Upper lobe of right lung (tissue), 1 donor: ENCODE measurements at regions of chr12 and their contacts with region 1.

Region 1: DNA sequence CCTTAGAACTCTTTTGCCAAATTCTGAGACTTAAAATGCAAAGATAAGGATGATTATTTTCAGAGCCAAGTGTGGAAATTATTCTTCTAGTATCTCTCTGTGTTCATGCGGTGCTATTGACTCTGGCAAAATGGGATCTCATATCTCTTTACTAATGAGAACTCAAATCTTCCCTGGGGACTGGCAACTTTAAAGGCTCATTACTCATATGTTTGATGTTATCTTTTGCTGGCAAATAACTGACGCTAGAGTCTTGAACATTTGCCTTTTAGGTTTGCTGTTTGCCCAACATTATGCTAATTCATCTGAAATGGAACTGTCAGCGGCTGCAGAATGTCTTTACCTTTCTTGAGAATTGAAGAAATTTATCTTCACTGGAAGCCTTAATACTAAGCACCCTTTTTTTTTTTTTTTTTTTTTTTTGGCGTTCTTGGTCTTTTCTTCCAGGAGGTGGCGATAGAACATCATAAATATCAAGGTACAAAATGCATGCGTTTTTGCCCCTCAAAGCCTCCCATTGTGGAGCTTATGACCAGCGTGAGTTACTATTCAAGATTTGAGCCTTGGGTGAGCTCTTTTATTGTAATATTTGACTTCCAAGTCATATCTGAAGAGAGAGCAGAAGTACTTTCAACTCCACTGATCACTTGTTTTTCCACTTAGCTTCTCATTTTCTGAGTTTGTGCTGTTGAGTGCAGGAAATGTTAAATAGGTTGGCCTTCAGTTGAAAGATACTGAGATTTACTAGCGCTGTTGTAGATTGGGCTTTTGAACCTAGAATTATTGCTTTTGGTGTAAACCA is 86.6 kb downstream of the CAND1 start:
- DNase-seq: no peak
- ATAC-seq: peak; percentile 70
- H3K4me3 ChIP-seq: no peak overlapping the region
- H3K27ac ChIP-seq: no peak overlapping the region
- H3K4me1 ChIP-seq: peaks cover 30% of the 10 kb centered on the region
- H3K27me3 ChIP-seq: no peaks in the 10 kb centered on the region
- CTCF ChIP-seq: peak; percentile 60

Region 2: GRCh38 chr12:66548338-66549049 is 807.3 kb before region 1 on chr12:
- intact Hi-C with region 1: no loop called
- DNase-seq: no peak
- ATAC-seq: no peak
- H3K4me3 ChIP-seq: no peak overlapping the region
- H3K27ac ChIP-seq: no peak overlapping the region
- H3K4me1 ChIP-seq: no peaks in the 10 kb centered on the region
- H3K27me3 ChIP-seq: no peaks in the 10 kb centered on the region
- CTCF ChIP-seq: no peak

Region 3: GRCh38 chr12:67394550-67394949 is 38.8 kb after region 1 on chr12:
- intact Hi-C with region 1: no loop called
- DNase-seq: no peak
- ATAC-seq: no peak
- H3K4me3 ChIP-seq: no peak overlapping the region
- H3K27ac ChIP-seq: no peak overlapping the region
- H3K4me1 ChIP-seq: no peaks in the 10 kb centered on the region
- H3K27me3 ChIP-seq: no peaks in the 10 kb centered on the region
- CTCF ChIP-seq: no peak

Region 4: GRCh38 chr12:67458215-67458614 is 102.4 kb after region 1 on chr12:
- intact Hi-C with region 1: no loop called
- DNase-seq: no peak
- ATAC-seq: no peak
- H3K4me3 ChIP-seq: no peak overlapping the region
- H3K27ac ChIP-seq: no peak overlapping the region
- H3K4me1 ChIP-seq: peaks cover 16% of the 10 kb centered on the region
- H3K27me3 ChIP-seq: no peaks in the 10 kb centered on the region
- CTCF ChIP-seq: no peak

Region 5: DNA sequence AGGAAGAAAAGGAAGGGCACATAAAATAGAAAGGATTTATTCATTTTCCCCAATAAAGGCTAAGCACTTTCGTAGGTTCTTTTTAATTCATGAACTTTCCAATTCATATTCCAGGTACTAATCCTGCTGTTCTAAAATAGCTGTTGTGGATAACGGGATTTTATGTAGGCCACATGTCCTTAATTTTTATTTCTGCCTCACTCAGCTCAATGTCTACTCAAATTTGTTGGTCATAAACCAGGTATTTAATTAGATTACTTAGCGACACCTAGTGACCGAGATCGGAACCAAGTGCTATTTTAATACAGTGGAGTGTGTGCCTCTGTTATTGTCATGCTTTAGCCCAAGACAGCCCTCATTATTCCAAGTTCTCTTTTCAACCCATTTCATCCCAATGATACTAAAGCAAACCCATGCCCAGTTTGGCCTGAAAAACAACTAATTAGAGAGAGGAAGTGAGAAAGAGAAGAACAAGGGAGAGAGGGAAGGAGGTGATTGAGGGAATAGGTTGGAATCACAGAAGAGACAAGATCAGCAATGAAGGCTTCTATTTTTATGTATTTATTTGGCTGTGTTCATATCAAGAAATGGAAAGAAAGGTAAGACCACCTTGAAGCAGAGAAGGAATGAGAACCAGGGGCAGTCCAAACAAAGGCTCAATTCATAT is 587.6 kb after region 1 on chr12:
- intact Hi-C with region 1: loop called (anchors 5 kb)
- DNase-seq: no peak
- ATAC-seq: peak; percentile 87
- H3K4me3 ChIP-seq: no peak overlapping the region
- H3K27ac ChIP-seq: no peak overlapping the region
- H3K4me1 ChIP-seq: peaks cover 10% of the 10 kb centered on the region
- H3K27me3 ChIP-seq: no peaks in the 10 kb centered on the region
- CTCF ChIP-seq: peak; percentile 74